Sigmoid colon (tissue), 7 donors: ENCODE measurements at regions of chr2 and their contacts with region 1.

Region 1: DNA sequence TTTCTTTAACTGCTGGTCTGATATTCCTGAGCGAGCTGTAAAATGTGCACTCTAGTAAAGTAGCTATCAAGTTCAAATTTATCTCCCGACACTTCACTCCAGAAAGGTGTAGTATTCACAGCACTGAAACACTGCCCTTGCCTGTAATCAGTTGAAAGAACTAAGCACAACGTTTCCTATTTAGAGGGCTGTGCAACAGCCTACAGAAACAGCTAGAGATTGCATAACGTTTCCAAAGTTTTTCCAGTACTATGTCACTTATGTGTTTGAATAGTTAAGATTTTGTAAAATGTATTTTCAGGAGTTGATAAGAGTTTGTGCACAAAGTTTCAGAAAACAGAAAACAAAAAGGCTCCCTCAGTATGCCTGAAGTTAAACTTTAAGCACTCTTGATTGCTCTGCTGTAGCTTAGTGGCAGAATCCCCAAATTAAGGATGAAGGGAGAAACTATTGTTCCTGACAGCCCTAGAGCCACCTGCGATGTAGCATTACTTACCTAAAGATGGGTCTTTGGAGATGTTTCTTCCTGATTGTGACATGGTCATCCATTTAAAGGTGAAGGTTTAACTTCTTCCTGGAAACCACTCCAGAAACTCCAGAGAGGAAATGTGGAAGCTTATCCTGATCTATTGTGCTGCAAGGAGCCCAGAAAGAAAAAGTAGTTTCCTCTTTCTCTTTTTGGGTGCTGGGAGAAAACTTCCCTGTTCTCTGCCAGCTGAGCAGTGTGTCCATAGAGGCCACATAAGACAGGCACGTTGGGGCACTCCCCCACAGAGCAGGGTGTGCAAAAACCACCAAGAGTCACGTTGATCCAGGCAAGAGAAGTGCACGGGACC is 536 bp downstream of the PDE1A start:
- DNase-seq: no peak
- H3K4me3 ChIP-seq: peak overlapping the region; percentile 27 to 50 (median 46)
- H3K27ac ChIP-seq: peak overlapping the region; percentile 63 to 76 (median 70)
- H3K4me1 ChIP-seq: peaks cover 0 to 18% (median 8%) of the 10 kb centered on the region in 4 donors
- H3K27me3 ChIP-seq: no peaks in the 10 kb centered on the region
- CTCF ChIP-seq: no peak
- EP300 ChIP-seq: no peak
- POLR2A ChIP-seq: no peak

Region 2: DNA sequence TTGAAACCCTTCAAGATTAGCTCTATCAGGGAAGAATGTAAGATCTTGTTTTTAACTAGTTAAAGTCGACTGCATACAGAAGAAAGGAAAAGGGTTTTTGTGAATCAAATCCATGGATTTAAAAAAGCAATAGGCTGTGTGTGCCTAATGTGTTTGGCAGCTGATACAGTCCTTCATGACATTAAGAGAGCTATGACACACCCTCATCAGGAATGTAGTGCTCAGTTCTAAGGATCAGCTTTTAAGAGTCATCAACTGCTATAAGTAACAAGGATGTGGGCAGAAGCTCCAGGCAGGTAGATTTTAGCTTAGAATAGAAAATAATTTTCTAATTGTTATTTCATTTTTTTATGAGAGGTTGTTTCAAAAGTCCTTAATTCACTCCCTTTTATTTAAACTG is 387.7 kb before region 1 on chr2:
- intact Hi-C with region 1: no loop called
- DNase-seq: no peak
- H3K4me3 ChIP-seq: no peak overlapping the region
- H3K27ac ChIP-seq: no peak overlapping the region
- H3K4me1 ChIP-seq: no peaks in the 10 kb centered on the region
- H3K27me3 ChIP-seq: no peaks in the 10 kb centered on the region
- CTCF ChIP-seq: no peak
- EP300 ChIP-seq: no peak
- POLR2A ChIP-seq: no peak

Region 3: GRCh38 chr2:182366625-182367024 is 59.7 kb before region 1 on chr2:
- intact Hi-C with region 1: loop called (anchors 5 kb)
- DNase-seq: peak; percentile 81
- H3K4me3 ChIP-seq: no peak overlapping the region
- H3K27ac ChIP-seq: peak overlapping the region in 3 of 4 donors; percentile 14 to 64 (median 40)
- H3K4me1 ChIP-seq: peaks cover 0 to 8% (median 3%) of the 10 kb centered on the region in 4 donors
- H3K27me3 ChIP-seq: no peaks in the 10 kb centered on the region
- CTCF ChIP-seq: no peak
- EP300 ChIP-seq: peak; percentile 27 to 69 (median 58)
- POLR2A ChIP-seq: no peak